Posterior vena cava (tissue), 2 donors: ENCODE measurements at regions of chr6 and their contacts with region 1.

Region 1: DNA sequence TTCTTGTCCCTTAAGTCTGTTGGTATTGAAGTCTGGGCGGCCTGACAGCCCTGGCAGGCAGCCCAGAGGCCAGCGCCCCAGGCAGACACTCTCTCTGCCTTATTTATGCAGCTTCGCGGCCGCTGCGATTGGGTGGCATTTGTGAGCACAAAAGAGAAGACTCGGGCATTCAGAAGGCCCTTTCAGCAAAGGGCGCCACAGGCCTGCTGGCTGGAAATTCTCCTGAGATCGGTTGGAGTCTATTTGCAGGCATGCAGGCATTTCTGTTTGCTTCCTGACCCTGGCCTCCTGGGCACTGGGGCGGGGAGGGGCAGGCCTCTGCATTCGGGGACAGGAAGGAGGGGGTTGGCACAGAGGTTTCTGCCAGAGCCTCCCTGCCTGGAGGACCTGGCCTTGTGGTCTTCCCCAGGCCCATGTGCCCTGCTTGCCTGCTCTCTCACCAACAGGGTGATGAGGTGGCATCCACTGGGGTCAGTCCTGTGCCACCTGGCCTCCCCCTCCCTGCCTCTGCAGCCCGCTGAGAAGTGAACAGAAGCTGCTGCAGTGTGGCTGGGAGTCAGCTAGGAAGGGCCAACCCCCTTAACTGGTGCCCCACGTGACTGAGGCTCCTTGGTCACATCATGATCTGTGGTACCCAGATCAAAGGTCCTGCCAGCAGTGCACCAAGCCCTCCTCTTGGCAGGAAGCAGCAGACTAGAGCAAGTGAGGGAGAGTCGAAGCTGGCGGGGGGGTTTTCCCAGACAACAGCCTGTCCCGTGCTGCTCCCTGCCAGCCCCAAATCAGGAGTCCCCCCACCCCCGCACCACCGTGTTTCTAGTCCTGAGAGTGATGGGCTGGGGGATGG is 16.6 kb upstream of the CCDC167 start:
- DNase-seq: no peak

Region 2: GRCh38 chr6:35534407-35535170 is 1981.7 kb before region 1 on chr6:
- intact Hi-C with region 1: loop called in 1 of 2 experiments (anchors 5 kb)
- DNase-seq: no peak

Region 3: GRCh38 chr6:36314221-36315014 is 1201.9 kb before region 1 on chr6:
- intact Hi-C with region 1: no loop called
- DNase-seq: peak; percentile 32

Region 4: DNA sequence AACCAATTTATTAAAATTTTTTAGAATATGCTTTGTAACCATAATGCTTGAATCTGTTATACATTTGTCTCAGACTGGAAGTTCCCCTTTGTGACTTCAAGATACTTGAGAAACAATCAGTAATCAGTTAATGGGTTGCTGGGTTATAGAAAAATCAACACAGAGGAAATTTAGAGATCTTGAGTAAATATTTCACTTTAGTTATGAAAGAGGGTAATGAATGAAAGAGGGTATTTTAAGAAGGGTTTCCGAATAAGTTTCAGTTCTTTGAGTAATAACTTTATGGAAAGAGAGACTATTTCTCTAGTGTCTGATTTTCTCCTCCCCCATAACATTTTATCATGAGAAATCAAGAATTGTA is 324.6 kb after region 1 on chr6:
- intact Hi-C with region 1: no loop called
- DNase-seq: no peak

Region 5: DNA sequence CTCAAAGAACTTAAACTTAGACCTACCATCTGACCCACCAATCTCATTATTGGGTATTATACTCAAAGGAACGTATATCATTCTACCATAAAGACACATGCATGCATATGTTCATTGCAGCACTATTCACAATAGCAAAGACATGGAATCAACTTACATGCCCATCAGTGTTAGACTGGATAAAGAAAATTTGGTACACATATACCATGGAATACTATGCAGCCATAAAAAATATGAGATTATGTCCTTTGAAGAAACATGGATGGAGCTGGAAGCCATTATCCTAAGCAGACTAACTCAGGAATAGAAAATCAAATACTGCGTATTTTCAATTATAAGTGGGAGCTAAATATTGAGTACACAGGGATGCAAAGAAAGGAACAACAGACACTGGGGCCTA is 1365.9 kb after region 1 on chr6:
- intact Hi-C with region 1: loop called in 1 of 2 experiments (anchors 5 kb)
- DNase-seq: no peak